ENCODE measurements at regions of chr22 and their contacts with region 1.

Region 1: DNA sequence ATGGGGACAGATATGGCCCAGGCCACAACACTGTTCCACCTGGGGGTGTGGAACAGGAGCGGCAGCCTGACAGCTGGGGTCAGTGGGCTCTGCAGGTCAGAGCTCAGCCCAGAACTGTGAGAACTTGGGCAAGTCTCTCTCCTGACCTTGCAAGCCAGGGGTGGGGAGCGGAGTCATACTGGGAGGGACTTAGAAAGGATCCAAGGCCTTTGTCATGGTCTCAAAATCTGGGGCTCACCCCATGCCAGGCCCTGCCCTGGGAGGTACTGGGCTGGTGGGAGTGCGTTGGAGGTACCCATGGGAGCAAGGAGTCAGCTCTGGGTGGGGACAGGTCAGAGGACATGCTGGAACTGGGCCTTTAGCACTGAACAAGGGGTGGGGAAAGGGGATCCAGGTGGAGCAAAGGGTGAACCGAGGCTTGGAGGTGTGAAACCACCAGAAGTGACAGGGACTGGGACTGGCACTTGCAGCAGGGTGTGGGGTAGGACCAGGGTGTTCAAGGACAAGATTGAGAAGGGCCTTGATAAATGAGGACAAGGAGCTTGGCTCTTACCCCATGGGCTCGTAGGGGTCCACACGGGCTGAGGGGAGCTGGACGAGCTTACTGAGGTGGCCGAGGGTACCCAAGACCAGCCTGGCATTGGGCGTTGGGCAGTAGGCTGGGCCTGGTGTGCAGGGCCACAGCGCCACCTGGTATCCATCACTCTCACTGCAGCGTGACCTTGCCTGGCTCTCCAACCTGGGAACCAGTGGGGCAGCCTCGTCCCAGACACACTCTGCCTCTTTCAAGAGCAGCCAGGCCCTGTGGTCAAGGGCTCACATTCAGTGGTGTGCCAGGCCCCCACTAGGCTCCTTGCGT is 7.4 kb upstream of the PMM1 start:
- DNase-seq: peak; percentile 54 to 87
- H3K4me3 ChIP-seq: no peak overlapping the region
- H3K27ac ChIP-seq: no peak overlapping the region
- H3K4me1 ChIP-seq: 0 out of 7 replicates have a peak, but pooled peaks cover 0 to 2% (median 0%) of the 10 kb centered on the region in 4 experiments
- H3K27me3 ChIP-seq: no peaks in the 10 kb centered on the region
- CTCF ChIP-seq: peak; percentile 96 to 100 (median 98)
- EP300 ChIP-seq: no peak
- POLR2A ChIP-seq: no peak; a peak in 1 of 3 replicates
- RAD21 ChIP-seq: peak; percentile 92 to 93

Region 2: GRCh38 chr22:41403532-41404318 is 193.3 kb before region 1 on chr22:
- CTCF ChIA-PET with region 1: interaction called, 10 read pairs
- POLR2A ChIA-PET with region 1: no interaction called
- DNase-seq: peak; percentile 66 to 90
- H3K4me3 ChIP-seq: no peak overlapping the region
- H3K27ac ChIP-seq: no peak overlapping the region
- H3K4me1 ChIP-seq: peaks cover 0 to under 1% (median 0%) of the 10 kb centered on the region in 4 experiments; a peak in 1 of 7 replicates
- H3K27me3 ChIP-seq: no peaks in the 10 kb centered on the region
- CTCF ChIP-seq: peak; percentile 95 to 100 (median 99)
- EP300 ChIP-seq: no peak
- POLR2A ChIP-seq: no peak
- RAD21 ChIP-seq: peak; percentile 99

Region 3: GRCh38 chr22:41543854-41544670 is 52.9 kb before region 1 on chr22 and contains the start of gene POLR3H:
- CTCF ChIA-PET with region 1: interaction called, 16 read pairs
- POLR2A ChIA-PET with region 1: interaction called, 6 read pairs
- DNase-seq: peak; percentile 91 to 98
- H3K4me3 ChIP-seq: peak within 1 kb of the TSS; percentile 51 to 90 (median 82)
- H3K27ac ChIP-seq: peak within 1 kb of the TSS; percentile 65; the same call in 1 of the 2 replicates
- H3K4me1 ChIP-seq: peaks cover 0 to 5% (median under 1%) of the 10 kb centered on the region in 4 experiments; a peak in 3 of 7 replicates
- H3K27me3 ChIP-seq: 0 out of 7 replicates have a peak, but pooled peaks cover 0 to 2% (median 0%) of the 10 kb centered on the region in 4 experiments
- CTCF ChIP-seq: peak; percentile 34 to 61 (median 45); a peak in 3 of 4 replicates
- EP300 ChIP-seq: no peak
- POLR2A ChIP-seq: peak in 1 of 2 experiments; percentile 58; a peak in 2 of 3 replicates
- RAD21 ChIP-seq: peak in 1 of 2 experiments; percentile 29; a peak in 2 of 4 replicates
- total RNA-seq, gene POLR3H: 34.5 and 39.2 TPM in 2 replicates

Region 4: DNA sequence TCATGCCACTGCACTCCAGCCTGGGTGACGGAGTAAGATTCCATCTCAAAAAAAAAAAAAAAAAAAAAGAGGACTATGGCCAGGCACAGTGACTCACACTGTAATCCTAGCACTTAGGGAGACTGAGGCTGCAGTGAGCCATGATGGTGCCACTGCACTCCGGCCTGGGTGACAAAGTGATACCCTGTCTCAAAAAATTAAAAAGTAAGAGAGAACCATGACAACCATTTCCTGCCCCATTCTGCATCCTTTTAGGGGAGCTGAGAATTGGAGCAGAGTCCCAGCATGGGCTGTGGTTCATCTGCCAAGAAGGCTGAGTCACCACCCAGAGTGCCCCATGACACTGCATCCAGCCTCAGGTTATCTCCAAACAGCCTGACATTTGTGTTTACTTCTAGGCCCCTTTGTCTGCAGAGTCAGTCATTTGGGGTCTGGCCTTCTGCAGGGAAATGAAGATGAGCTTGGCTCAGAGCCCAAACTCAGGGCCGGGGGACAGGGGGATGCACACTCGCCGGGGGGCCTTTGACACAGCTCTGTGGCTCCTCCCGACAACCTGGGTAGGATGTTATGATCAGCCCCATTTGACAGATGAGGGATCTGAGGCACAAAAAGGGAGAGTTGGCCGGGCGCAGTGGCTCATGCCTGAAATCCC is 31.5 kb before region 1 on chr22:
- CTCF ChIA-PET with region 1: interaction called, 14 read pairs
- POLR2A ChIA-PET with region 1: interaction called, 4 read pairs
- DNase-seq: no peak
- H3K4me3 ChIP-seq: no peak overlapping the region
- H3K27ac ChIP-seq: no peak overlapping the region
- H3K4me1 ChIP-seq: peaks cover 4 to 28% (median 19%) of the 10 kb centered on the region in 4 experiments
- H3K27me3 ChIP-seq: 0 out of 7 replicates have a peak, but pooled peaks cover 0 to 3% (median 0%) of the 10 kb centered on the region in 4 experiments
- CTCF ChIP-seq: no peak
- EP300 ChIP-seq: no peak
- POLR2A ChIP-seq: no peak
- RAD21 ChIP-seq: no peak

Region 5: DNA sequence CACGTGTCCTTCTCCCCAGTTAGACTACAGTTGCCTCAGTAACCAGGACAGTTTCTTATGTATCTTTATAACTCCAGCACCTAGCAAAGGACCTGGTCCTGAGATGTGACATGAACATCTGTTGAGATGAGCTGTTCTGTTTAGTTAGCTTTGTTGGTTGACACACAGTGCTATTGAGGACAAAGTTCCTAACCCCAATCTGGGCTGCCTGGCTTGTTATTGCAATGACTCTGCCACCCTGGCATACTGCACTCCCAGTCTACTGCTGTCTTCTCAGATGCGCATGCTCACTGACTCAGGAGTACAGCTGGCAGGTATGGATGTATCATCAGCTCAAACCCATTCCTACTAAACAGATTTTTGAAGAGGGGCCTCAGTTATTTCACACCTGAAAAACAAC is 16.5 kb after region 1 on chr22:
- CTCF ChIA-PET with region 1: interaction called, 31 read pairs
- POLR2A ChIA-PET with region 1: interaction called, 17 read pairs
- DNase-seq: no peak
- H3K4me3 ChIP-seq: no peak overlapping the region
- H3K27ac ChIP-seq: no peak overlapping the region
- H3K4me1 ChIP-seq: peaks cover 0 to 2% (median 0%) of the 10 kb centered on the region in 4 experiments; a peak in 1 of 7 replicates
- H3K27me3 ChIP-seq: no peaks in the 10 kb centered on the region
- CTCF ChIP-seq: no peak
- EP300 ChIP-seq: no peak
- POLR2A ChIP-seq: no peak
- RAD21 ChIP-seq: no peak

Region 6: GRCh38 chr22:41752011-41752970 is 155.3 kb after region 1 on chr22:
- CTCF ChIA-PET with region 1: no interaction called
- POLR2A ChIA-PET with region 1: no interaction called
- DNase-seq: no peak
- H3K4me3 ChIP-seq: no peak overlapping the region
- H3K27ac ChIP-seq: no peak overlapping the region
- H3K4me1 ChIP-seq: peaks cover 0 to 7% (median 4%) of the 10 kb centered on the region in 4 experiments; a peak in 5 of 7 replicates
- H3K27me3 ChIP-seq: no peaks in the 10 kb centered on the region; a peak in 2 of 7 replicates
- CTCF ChIP-seq: no peak
- EP300 ChIP-seq: no peak
- POLR2A ChIP-seq: no peak
- RAD21 ChIP-seq: no peak

Measured in H1 (cell line).